ENCODE measurements at regions of chr12 and their contacts with region 1.

Region 1: GRCh38 chr12:127012109-127012508 is 1254.9 kb upstream of the TMEM132C start:
- DNase-seq: no peak
- ATAC-seq: no peak
- H3K4me3 ChIP-seq: no peak overlapping the region
- H3K4me3 Mint-ChIP-seq: no peak overlapping the region
- H3K27ac ChIP-seq: no peak overlapping the region
- H3K27ac Mint-ChIP-seq: no peak overlapping the region
- H3K4me1 ChIP-seq: no peaks in the 10 kb centered on the region
- H3K4me1 Mint-ChIP-seq: no peaks in the 10 kb centered on the region
- H3K27me3 ChIP-seq: no peaks in the 10 kb centered on the region
- H3K27me3 Mint-ChIP-seq: peaks cover 0 to 5% of the 10 kb centered on the region in 2 donors
- CTCF ChIP-seq: no peak

Region 2: GRCh38 chr12:126936181-126936851 is 75.8 kb before region 1 on chr12:
- intact Hi-C with region 1: no loop called
- DNase-seq: no peak
- ATAC-seq: no peak
- H3K4me3 ChIP-seq: no peak overlapping the region
- H3K4me3 Mint-ChIP-seq: no peak overlapping the region
- H3K27ac ChIP-seq: no peak overlapping the region
- H3K27ac Mint-ChIP-seq: no peak overlapping the region
- H3K4me1 ChIP-seq: no peaks in the 10 kb centered on the region
- H3K4me1 Mint-ChIP-seq: peaks cover 0 to 9% of the 10 kb centered on the region in 2 donors
- H3K27me3 ChIP-seq: no peaks in the 10 kb centered on the region
- H3K27me3 Mint-ChIP-seq: no peaks in the 10 kb centered on the region
- CTCF ChIP-seq: no peak

Region 3: DNA sequence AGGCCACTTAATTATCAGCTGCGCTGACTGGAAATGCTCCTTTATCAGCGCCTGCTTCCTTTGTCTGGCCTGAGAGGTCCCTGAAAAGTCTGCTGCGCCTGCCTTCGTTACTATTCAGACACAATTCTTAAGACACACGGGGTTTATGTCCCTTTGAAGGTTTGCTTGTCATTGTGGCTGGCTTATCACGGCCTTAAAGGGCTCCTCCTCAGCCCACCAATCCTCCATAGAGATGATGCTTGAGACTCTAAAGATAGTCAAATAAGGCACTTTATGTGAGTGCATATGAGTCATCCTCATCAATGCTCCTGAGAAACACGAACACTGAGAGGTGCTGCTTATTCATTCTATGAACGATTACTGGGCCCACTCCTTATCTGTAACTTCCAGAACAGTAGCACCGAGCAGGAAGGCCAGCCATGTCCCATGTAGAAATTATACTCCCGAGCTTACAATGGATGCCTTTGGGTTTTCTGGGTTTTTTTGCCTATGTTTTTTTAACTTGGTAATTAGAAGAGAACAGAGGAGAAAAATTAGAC is 13.3 kb before region 1 on chr12:
- intact Hi-C with region 1: loop called (anchors 1 kb)
- DNase-seq: no peak
- ATAC-seq: no peak
- H3K4me3 ChIP-seq: no peak overlapping the region
- H3K4me3 Mint-ChIP-seq: no peak overlapping the region
- H3K27ac ChIP-seq: no peak overlapping the region
- H3K27ac Mint-ChIP-seq: no peak overlapping the region
- H3K4me1 ChIP-seq: no peaks in the 10 kb centered on the region
- H3K4me1 Mint-ChIP-seq: no peaks in the 10 kb centered on the region
- H3K27me3 ChIP-seq: no peaks in the 10 kb centered on the region
- H3K27me3 Mint-ChIP-seq: no peaks in the 10 kb centered on the region
- CTCF ChIP-seq: no peak

Region 4: DNA sequence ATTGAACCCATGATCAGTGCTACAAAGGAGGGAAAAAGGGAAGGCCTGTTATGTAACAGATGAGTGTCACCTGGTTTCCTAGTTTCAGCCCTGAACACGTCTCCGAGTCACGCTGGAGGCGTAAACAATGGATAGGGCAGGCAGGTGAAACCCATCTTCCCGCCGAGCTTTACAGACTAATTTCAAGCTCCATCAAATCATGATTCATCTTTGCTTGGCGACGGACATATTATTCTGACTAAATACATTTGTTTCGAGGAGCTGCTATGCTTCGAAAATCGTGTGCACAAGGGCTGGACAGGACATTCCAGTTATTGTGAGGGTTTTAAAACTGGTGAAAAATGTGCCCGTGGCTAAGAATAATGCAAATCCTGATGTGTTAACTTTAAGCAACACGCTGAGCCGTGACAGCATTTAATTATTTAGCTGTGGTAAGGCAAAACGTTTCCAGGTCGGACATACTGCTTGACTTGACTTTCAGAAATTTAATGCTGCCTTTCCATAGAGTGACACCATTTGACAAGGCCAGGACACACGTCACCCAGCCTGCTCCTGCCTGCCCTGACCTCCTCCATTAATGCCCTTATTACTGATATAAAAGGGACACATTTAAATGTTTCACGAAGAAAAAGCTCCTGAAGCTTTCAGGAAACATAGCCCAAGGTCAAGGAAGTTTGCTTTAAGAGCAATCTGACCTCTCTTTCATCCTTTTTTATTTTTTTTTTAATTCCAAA is 51.4 kb after region 1 on chr12:
- intact Hi-C with region 1: no loop called
- DNase-seq: no peak
- ATAC-seq: no peak
- H3K4me3 ChIP-seq: no peak overlapping the region
- H3K4me3 Mint-ChIP-seq: no peak overlapping the region
- H3K27ac ChIP-seq: no peak overlapping the region
- H3K27ac Mint-ChIP-seq: no peak overlapping the region
- H3K4me1 ChIP-seq: no peaks in the 10 kb centered on the region
- H3K4me1 Mint-ChIP-seq: no peaks in the 10 kb centered on the region
- H3K27me3 ChIP-seq: no peaks in the 10 kb centered on the region
- H3K27me3 Mint-ChIP-seq: no peaks in the 10 kb centered on the region
- CTCF ChIP-seq: no peak